HEK293 (cell line): ENCODE measurements at regions of chr7 and their contacts with region 1.

Region 1: GRCh38 chr7:81499262-81500116 is 270.4 kb downstream of the HGF start:
- H3K4me3 ChIP-seq: no peak overlapping the region
- H3K27ac ChIP-seq: no peak overlapping the region
- H3K4me1 ChIP-seq: peaks cover 2% of the 10 kb centered on the region; the same call in 1 of the 2 replicates
- CTCF ChIP-seq: peak; percentile 70

Region 2: DNA sequence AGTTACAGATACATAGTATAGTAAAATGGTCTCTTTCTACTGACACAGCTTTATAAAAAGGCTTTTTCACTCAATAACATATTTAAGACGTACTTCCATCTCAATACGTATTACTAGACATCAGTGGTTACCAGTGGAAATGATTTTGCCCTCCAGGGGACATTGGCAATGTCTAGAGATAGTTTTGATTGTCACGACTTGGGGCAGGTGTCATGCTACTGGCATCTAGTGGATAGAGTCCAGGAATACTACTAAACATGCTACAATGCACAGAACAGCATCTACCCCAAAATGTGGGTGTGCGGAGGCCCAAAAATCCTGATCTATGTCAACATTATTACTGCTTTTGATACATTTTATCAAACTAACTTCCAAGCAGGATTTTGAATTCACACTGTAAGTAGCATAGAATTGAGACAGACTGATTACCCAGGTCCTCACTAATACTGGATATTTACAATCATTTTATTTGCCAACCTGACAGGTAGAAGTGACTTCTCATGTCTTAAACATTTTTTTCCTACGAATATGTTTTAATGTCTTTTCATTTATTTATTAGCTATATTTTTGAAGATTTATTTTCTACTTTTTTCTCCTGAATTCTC is 216.6 kb after region 1 on chr7:
- CTCF ChIA-PET with region 1: interaction called, 34 read pairs
- POLR2A ChIA-PET with region 1: no interaction called
- H3K4me3 ChIP-seq: no peak overlapping the region
- H3K27ac ChIP-seq: no peak overlapping the region
- H3K4me1 ChIP-seq: no peaks in the 10 kb centered on the region
- CTCF ChIP-seq: peak; percentile 64

Region 3: DNA sequence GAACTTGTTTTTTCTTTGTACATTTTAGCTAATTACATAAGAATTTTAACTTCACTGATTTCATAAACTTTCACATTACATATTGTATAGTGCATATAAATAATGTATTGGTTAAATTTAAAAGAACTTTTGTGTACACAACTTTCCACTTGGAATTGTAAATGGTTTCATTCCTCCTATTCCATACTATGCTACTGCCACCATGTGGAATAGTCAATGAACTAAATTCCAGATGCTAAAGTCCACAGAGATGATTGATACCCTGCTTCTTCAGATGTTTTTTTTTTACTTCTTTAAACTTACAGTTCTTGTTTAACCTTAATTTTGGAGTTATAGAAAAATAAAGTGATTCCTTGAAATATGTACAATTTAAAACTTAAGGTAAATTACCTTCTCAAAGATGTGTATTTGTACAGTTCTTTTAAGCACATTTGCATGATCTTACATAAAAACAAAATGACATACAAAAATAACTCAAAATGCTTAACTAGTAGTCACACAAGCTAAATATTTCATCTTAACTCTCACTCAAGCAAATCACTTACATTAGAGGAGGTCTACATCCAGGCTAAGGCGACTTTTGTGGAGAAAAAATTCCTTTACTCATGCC is 518.0 kb after region 1 on chr7:
- CTCF ChIA-PET with region 1: interaction called, 67 read pairs
- POLR2A ChIA-PET with region 1: no interaction called
- H3K4me3 ChIP-seq: no peak overlapping the region
- H3K27ac ChIP-seq: no peak overlapping the region
- H3K4me1 ChIP-seq: no peaks in the 10 kb centered on the region; the same call in 1 of the 2 replicates
- CTCF ChIP-seq: no peak

Region 4: DNA sequence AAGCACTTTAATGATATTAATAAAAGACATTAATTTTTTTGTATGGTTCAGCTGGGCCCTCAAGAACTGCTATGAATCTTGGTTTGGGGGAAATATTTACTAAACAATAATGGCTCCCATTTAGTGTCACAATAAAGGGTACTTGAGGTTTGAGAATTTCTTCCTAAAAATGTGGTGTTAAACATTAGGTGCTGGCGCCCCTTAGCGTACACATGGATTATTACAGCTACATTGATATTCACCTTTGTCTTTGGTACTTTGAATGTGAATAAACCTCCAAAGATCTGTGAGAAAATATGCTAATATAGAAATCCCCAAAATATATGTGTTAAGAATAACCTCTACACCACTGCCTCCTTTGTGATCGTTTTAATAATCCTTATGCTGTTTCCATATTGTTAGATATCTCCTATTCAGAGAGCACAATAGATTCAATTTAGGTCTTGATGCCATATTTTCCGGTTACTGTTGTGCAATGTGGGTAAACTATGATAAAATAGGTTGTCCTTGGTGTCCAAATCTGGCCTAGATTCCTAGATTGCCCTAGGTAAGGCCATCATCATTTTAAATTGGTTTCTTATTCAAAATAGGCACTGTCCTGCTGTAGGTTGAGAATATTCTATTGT is 1105.9 kb after region 1 on chr7:
- CTCF ChIA-PET with region 1: interaction called, 11 read pairs
- POLR2A ChIA-PET with region 1: no interaction called
- H3K4me3 ChIP-seq: no peak overlapping the region
- H3K27ac ChIP-seq: no peak overlapping the region
- H3K4me1 ChIP-seq: peaks cover 2% of the 10 kb centered on the region; the same call in 1 of the 2 replicates
- CTCF ChIP-seq: 0 out of 2 replicates have a peak, but pooled peaks have one; percentile 18